ENCODE measurements at regions of chr6 and their contacts with region 1.

Region 1: DNA sequence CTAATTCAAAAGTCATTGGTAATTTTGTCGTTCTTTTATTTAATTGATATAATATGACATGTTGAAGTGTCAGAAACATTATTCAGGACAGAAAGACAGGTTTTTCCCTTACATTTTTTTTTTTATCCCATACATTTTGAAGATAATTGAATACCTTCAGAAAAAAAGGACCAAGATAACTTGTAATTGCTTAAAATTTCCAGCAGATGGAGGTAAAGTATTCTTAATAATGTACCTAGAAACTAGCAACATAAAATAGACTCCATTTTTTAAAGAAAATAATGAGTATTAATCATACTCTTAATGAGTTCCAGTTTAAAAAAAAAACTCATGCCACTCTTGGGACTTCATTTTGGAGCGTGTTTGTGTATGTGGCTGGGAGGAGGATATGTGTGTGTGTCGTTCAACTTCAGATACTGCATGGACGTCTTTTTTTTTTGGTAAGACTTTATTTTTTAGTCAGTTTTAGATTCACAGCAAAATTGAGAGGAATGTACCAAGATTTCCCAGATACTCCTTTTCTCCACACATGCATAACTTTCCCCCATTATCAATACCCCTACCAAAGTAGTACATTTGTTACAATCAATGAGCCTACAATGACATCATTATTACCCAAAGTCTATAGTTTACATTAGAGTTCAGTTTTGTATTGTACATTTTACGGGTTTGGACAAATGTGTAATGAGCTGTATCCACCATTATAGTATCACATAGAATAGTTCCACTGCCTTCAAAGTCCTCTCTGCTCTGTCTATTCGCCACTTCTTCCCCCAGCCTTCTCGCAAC is 79.4 kb downstream of the ROS1 start:
- DNase-seq: no peak
- ATAC-seq: no peak
- H3K4me3 ChIP-seq: peak overlapping the region; percentile 52
- H3K27ac ChIP-seq: no peak overlapping the region
- H3K4me1 ChIP-seq: no peaks in the 10 kb centered on the region
- H3K27me3 ChIP-seq: no peaks in the 10 kb centered on the region

Region 2: GRCh38 chr6:117298941-117299340 is 47.4 kb before region 1 on chr6:
- intact Hi-C with region 1: no loop called
- DNase-seq: no peak
- ATAC-seq: no peak
- H3K4me3 ChIP-seq: no peak overlapping the region
- H3K27ac ChIP-seq: no peak overlapping the region
- H3K4me1 ChIP-seq: no peaks in the 10 kb centered on the region
- H3K27me3 ChIP-seq: no peaks in the 10 kb centered on the region

Region 3: GRCh38 chr6:117605169-117605826 is 259.0 kb after region 1 on chr6:
- intact Hi-C with region 1: loop called in 1 of 4 experiments (anchors 5 kb)
- DNase-seq: peak in 1 of 3 donors; percentile 14
- ATAC-seq: no peak
- H3K4me3 ChIP-seq: no peak overlapping the region
- H3K27ac ChIP-seq: no peak overlapping the region
- H3K4me1 ChIP-seq: no peaks in the 10 kb centered on the region
- H3K27me3 ChIP-seq: no peaks in the 10 kb centered on the region